Adrenal gland (tissue), 19 donors: ENCODE measurements at regions of chr1 and their contacts with region 1.

Region 1: DNA sequence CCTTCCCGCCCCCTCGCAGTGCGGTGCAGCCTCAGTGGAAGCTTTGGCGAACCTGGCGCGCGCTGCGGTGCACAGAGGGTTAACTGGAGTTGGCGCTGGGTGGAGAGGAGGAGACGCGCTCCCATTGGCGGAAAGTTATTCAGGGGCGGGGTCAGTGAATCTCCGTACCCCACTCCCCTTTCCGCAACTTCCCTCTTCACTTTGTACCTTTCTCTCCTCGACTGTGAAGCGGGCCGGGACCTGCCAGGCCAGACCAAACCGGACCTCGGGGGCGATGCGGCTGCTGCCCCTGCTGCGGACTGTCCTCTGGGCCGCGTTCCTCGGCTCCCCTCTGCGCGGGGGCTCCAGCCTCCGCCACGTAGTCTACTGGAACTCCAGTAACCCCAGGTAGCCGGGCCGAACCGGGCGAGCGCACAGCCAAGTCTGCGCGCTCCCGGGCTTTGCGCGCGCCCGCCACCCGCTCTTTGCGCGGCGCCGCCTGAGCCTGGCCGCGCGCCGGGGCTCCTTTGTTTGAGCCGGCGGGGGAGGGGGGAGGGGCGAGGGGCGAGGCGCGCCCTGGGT is at the start of gene EFNA4:
- DNase-seq: peak; percentile 85 to 91 (median 89)
- H3K4me3 ChIP-seq: peak within 1 kb of the TSS; percentile 60 to 89 (median 68)
- H3K27ac ChIP-seq: peak within 1 kb of the TSS; percentile 20 to 94 (median 78)
- H3K4me1 ChIP-seq: peaks cover 11 to 36% of the 10 kb centered on the region in 2 donors
- H3K27me3 ChIP-seq: no peaks in the 10 kb centered on the region
- CTCF ChIP-seq: no peak
- POLR2A ChIP-seq: peak; percentile 32 to 69
- total RNA-seq, gene EFNA4: 3.5 to 28.7 (median 12.7) TPM

Region 2: DNA sequence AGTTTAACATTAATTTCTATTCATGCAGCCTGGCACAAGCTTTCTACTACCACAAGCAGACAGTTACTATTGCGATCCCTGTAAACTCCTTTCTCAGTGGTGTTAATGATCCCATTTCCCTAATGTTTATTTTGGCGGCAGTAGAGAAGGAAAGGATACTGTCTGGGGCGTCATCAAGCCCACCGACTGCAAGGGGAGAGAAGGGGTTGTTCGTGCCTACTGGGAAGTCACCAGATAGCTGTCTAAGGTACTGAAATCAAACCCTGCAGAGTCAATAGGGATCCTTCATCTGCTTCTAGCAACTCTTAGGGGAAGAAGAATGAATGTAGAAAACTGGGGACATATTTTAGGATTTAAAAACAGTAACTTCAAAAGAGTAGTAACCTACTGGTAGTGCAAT is 360.5 kb before region 1 on chr1:
- intact Hi-C with region 1: no loop called
- DNase-seq: no peak
- H3K4me3 ChIP-seq: no peak overlapping the region
- H3K27ac ChIP-seq: no peak overlapping the region
- H3K4me1 ChIP-seq: peaks cover 0 to 4% of the 10 kb centered on the region in 2 donors
- H3K27me3 ChIP-seq: no peaks in the 10 kb centered on the region
- CTCF ChIP-seq: no peak
- POLR2A ChIP-seq: no peak

Region 3: DNA sequence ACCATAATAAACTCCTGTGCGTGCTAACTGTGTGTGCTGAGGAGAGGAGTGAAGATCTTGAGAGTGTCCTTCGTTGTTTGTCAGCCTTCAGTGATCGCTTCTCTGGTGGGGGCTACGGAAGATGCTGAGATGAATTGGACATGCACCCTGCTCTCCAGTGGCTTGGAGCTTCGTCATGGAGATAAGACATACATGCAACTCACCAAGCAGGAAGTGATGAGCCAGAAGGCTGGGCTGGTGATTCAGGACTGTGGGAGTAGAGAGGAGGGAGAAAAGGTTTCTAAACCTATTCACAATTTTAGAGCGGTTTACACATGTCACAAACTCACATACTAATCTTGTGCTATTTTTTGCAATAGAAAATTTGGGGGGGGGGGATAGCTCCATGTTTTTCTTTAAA is 326.8 kb before region 1 on chr1:
- intact Hi-C with region 1: no loop called
- DNase-seq: no peak
- H3K4me3 ChIP-seq: no peak overlapping the region
- H3K27ac ChIP-seq: no peak overlapping the region
- H3K4me1 ChIP-seq: peaks cover 0 to 4% of the 10 kb centered on the region in 2 donors
- H3K27me3 ChIP-seq: no peaks in the 10 kb centered on the region
- CTCF ChIP-seq: no peak
- POLR2A ChIP-seq: no peak

Region 4: GRCh38 chr1:154906621-154907081 is 157.0 kb before region 1 on chr1:
- intact Hi-C with region 1: loop called in 1 of 2 experiments (anchors 5 kb)
- DNase-seq: peak in 6 of 7 donors; percentile 24 to 57 (median 30)
- H3K4me3 ChIP-seq: no peak overlapping the region
- H3K27ac ChIP-seq: no peak overlapping the region
- H3K4me1 ChIP-seq: no peaks in the 10 kb centered on the region
- H3K27me3 ChIP-seq: no peaks in the 10 kb centered on the region
- CTCF ChIP-seq: peak; percentile 31 to 71 (median 60)
- POLR2A ChIP-seq: no peak